ENCODE measurements at regions of chr20 and their contacts with region 1.

Region 1: DNA sequence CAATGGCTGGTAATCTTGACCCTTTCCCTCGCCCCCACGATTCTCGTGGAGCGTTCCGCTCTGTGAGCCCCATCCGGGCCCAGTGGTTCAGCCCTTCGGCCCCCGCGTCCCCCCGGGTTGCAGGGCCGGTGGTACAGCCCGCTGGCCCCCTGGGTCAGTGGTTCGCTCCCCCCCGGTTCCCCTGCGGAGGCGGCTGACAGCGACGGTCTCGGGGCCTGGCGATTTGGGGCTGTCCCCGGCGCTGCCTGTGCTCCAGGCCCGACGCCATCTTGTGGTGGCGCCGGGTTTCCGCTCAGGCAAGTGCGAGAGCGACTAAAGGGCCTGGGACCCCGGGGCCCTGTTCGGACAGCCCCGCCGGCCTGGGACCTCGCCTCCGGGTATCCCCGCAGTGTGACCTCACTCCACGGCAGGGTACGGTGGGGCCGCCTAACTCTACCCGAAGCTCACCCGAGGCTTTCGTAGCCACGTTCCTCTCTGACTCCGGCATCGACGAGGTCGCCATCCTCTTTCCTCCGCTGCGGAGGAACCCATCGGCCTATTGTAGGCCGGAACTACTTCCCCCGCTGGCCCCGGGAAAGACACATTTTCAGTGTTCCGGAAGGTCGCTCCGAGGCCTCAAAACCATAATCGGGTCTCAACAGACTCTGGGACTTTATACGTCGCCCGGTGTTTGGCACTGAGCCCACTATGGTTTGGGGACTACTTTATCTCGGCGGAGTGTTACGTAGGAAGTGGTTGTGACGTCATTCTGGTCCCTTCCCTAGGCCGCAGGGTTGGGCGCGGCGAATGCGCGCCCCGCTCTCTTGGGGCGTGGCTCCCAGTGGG is at the start of gene ZNF335:
- DNase-seq: peak; percentile 92 to 98 (median 96)
- H3K4me3 ChIP-seq: peak within 1 kb of the TSS; percentile 79 to 97
- H3K4me3 Mint-ChIP-seq: peak within 1 kb of the TSS; percentile 91 to 99 (median 95)
- H3K27ac ChIP-seq: peak within 1 kb of the TSS; percentile 100
- H3K27ac Mint-ChIP-seq: peak within 1 kb of the TSS; percentile 99 to 100 (median 100)
- H3K4me1 ChIP-seq: peaks cover 30% of the 10 kb centered on the region
- H3K4me1 Mint-ChIP-seq: peaks cover 14 to 33% (median 22%) of the 10 kb centered on the region in 4 donors
- H3K27me3 ChIP-seq: no peaks in the 10 kb centered on the region
- H3K27me3 Mint-ChIP-seq: peaks cover 2 to 8% of the 10 kb centered on the region in 2 donors
- total RNA-seq, gene ZNF335: 62.5 to 63.2 TPM

Region 2: DNA sequence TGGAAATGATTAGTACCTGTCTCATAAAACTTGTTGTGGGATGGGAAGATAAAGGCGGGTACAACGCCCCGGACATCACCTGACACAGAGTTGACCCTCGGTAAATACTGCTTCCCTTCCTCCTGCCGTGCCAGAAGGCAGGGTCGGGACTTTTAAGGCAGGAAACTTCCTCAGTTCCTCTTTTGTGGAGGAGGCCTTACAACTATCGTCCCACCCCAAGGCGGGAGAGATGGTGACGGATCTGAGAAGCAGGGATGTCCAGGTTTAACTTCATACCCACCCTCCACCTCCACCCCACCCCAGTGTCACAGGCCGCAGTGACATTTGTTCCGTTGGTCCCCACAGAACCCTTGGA is 179.6 kb before region 1 on chr20:
- CTCF ChIA-PET with region 1: interaction called, 4 read pairs
- POLR2A ChIA-PET with region 1: interaction called, 9 read pairs
- intact Hi-C with region 1: loop called (anchors 5 kb)
- DNase-seq: no peak
- H3K4me3 ChIP-seq: peak overlapping the region; percentile 79 to 93
- H3K4me3 Mint-ChIP-seq: peak overlapping the region; percentile 85 to 98 (median 93)
- H3K27ac ChIP-seq: peak overlapping the region; percentile 88
- H3K27ac Mint-ChIP-seq: peak overlapping the region; percentile 83 to 99 (median 95)
- H3K4me1 ChIP-seq: peaks cover 16% of the 10 kb centered on the region
- H3K4me1 Mint-ChIP-seq: peaks cover 11 to 18% (median 14%) of the 10 kb centered on the region in 4 donors
- H3K27me3 ChIP-seq: no peaks in the 10 kb centered on the region
- H3K27me3 Mint-ChIP-seq: no peaks in the 10 kb centered on the region

Region 3: DNA sequence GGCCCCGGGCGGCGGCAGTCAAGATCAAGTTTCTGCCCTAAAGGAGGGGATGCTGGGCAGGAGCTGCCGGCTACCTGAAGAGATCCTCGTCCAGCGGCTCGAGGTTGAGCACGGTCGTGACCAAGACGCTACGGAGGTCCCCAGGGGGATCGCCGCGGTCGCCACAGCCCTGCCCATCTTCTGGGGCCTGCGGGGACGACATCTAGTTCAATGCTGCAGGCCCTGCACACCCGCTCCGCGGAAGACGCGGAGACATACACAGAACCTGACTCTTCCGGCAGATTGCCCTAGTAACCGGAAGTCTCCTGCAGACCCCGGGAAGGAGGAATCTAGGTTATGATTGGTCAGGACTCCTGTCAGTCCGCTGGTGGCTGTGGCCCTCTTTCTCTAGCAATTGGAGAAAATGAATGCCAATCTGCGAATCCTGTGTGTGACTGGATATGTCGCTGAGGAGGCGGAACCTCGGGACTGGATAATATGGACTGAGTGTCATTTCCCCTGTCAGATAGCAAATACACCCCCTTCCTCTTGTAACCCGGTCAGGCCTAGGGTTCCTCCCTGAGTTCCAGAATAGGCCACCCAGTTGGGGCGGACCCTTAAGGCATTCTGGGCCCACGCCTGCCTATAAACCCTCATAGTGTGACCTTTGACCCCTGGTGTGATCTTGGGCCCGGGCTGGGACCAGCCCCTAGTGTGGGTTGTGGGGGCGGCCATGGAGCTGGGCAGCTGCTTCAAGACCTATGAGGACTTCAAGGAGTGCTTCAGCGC is 114.6 kb before region 1 on chr20 and contains the starts of genes ACOT8 and ZSWIM3:
- CTCF ChIA-PET with region 1: interaction called, 3 read pairs
- POLR2A ChIA-PET with region 1: interaction called, 35 read pairs
- intact Hi-C with region 1: loop called (anchors 1 kb)
- DNase-seq: peak; percentile 97 to 99 (median 99)
- H3K4me3 ChIP-seq: peak within 1 kb of the TSS; percentile 73 to 78
- H3K4me3 Mint-ChIP-seq: peak within 1 kb of the TSS; percentile 86 to 98 (median 95)
- H3K27ac ChIP-seq: peak within 1 kb of the TSS; percentile 76
- H3K27ac Mint-ChIP-seq: peak within 1 kb of the TSS; percentile 84 to 99 (median 98)
- H3K4me1 ChIP-seq: peaks cover 35% of the 10 kb centered on the region
- H3K4me1 Mint-ChIP-seq: peaks cover 25 to 66% (median 39%) of the 10 kb centered on the region in 4 donors
- H3K27me3 ChIP-seq: no peaks in the 10 kb centered on the region
- H3K27me3 Mint-ChIP-seq: no peaks in the 10 kb centered on the region
- total RNA-seq, gene ACOT8: 30.6 to 33.4 TPM
- total RNA-seq, gene ZSWIM3: 6.7 to 7.1 TPM

Region 4: GRCh38 chr20:45946149-45946970 is 25.5 kb before region 1 on chr20:
- CTCF ChIA-PET with region 1: interaction called, 23 read pairs
- POLR2A ChIA-PET with region 1: interaction called, 141 read pairs
- intact Hi-C with region 1: no loop called
- DNase-seq: peak in 3 of 5 donors; percentile 21 to 66 (median 30)
- H3K4me3 ChIP-seq: no peak overlapping the region
- H3K4me3 Mint-ChIP-seq: no peak overlapping the region
- H3K27ac ChIP-seq: no peak overlapping the region
- H3K27ac Mint-ChIP-seq: peak overlapping the region in 4 of 7 donors; percentile 48 to 74 (median 72)
- H3K4me1 ChIP-seq: peaks cover 3% of the 10 kb centered on the region
- H3K4me1 Mint-ChIP-seq: peaks cover 2 to 22% (median 14%) of the 10 kb centered on the region in 4 donors
- H3K27me3 ChIP-seq: no peaks in the 10 kb centered on the region
- H3K27me3 Mint-ChIP-seq: no peaks in the 10 kb centered on the region

Region 5: GRCh38 chr20:46013826-46014516 is 42.1 kb after region 1 on chr20:
- CTCF ChIA-PET with region 1: interaction called, 32 read pairs
- POLR2A ChIA-PET with region 1: interaction called, 18 read pairs
- intact Hi-C with region 1: loop called (anchors 5 kb)
- DNase-seq: peak; percentile 59 to 82 (median 64)
- H3K4me3 ChIP-seq: peak overlapping the region in 1 of 2 donors; percentile 33
- H3K4me3 Mint-ChIP-seq: peak overlapping the region; percentile 45 to 81 (median 64)
- H3K27ac ChIP-seq: no peak overlapping the region
- H3K27ac Mint-ChIP-seq: peak overlapping the region in 3 of 7 donors; percentile 54 to 78 (median 57)
- H3K4me1 ChIP-seq: peaks cover 50% of the 10 kb centered on the region
- H3K4me1 Mint-ChIP-seq: peaks cover 25 to 67% (median 45%) of the 10 kb centered on the region in 4 donors
- H3K27me3 ChIP-seq: peaks cover 30% of the 10 kb centered on the region
- H3K27me3 Mint-ChIP-seq: peaks cover 26 to 61% of the 10 kb centered on the region in 2 donors

Region 6: DNA sequence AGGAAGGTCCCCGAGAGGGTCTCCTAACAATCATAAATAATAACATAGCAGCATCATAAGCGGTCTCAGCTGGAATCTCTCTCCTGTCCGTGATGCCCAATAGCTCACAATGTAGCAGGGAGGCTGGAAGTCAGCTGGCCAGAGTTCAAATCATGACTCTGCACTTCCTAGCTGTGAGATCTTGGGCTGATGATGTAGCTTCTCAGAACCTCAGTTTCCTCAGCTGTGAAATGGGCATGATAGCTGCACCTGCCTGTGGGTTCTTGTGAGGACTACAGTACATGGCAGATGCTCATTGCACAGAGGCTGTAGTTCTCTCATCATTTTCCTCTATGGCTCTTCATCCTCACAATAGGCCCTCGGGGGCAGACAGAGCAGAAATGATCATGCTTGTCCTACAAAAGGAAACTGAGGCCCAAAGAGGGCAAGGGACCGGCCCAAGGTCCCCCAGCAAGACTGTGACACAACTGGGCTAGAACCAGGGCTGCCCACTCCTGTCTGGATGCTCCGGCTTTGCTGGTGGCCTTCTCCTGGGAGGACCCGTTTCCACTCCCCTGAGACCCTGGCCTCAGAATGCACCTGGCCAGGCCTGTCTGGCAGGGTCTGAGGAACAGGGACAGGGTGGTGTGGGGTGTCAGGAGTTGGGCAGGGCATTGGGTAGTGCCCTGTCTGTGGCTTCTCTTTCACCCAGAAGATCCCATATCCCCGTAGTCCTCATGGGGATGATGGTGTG is 74.9 kb after region 1 on chr20:
- CTCF ChIA-PET with region 1: no interaction called
- POLR2A ChIA-PET with region 1: no interaction called
- intact Hi-C with region 1: no loop called
- DNase-seq: no peak
- H3K4me3 ChIP-seq: no peak overlapping the region
- H3K4me3 Mint-ChIP-seq: no peak overlapping the region
- H3K27ac ChIP-seq: no peak overlapping the region
- H3K27ac Mint-ChIP-seq: no peak overlapping the region
- H3K4me1 ChIP-seq: no peaks in the 10 kb centered on the region
- H3K4me1 Mint-ChIP-seq: no peaks in the 10 kb centered on the region
- H3K27me3 ChIP-seq: peaks cover 4% of the 10 kb centered on the region
- H3K27me3 Mint-ChIP-seq: peaks cover 40 to 42% of the 10 kb centered on the region in 2 donors

Region 7: DNA sequence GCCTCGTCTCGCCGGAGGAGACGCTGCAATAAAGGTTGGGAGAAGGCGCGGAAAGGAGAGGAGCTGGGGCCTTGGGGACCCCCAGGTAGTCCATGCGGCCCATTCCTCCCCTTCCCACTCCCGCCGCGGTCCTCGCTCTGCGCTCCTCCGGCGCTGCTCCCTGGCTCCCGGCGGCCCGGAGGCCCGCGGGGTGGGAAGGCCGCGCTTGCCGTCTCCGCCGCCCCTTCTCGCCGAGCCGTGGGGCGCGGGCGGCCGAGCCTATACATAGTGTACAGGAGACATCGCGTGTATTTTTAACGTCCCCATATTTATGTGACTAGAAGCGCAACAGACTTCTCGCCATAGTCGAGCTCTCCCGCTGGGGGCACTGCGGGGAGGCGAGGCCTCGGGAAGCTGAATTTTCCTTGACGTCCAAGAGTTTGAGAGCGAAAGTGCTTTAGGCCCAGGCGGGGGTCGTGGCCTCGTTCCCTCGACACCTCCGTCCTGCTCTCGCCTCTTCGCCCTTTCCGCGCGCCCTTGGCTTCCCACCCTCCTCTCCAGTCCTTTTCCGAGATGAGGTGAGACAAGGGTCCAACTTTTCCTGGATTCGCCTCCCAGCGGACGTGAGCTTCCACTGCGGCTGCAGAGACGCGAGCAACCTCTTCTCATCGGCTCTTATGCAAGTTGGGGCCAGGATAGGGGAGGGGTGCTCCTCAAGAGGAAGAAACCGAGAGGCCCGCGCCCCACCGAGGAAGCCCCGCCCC is 86.1 kb after region 1 on chr20:
- CTCF ChIA-PET with region 1: no interaction called
- POLR2A ChIA-PET with region 1: no interaction called
- intact Hi-C with region 1: no loop called
- DNase-seq: peak in 3 of 5 donors; percentile 12 to 15 (median 13)
- H3K4me3 ChIP-seq: no peak overlapping the region
- H3K4me3 Mint-ChIP-seq: peak overlapping the region; percentile 52 to 75 (median 66)
- H3K27ac ChIP-seq: no peak overlapping the region
- H3K27ac Mint-ChIP-seq: peak overlapping the region in 1 of 7 donors; percentile 72
- H3K4me1 ChIP-seq: peaks cover 46% of the 10 kb centered on the region
- H3K4me1 Mint-ChIP-seq: peaks cover 38 to 58% (median 48%) of the 10 kb centered on the region in 4 donors
- H3K27me3 ChIP-seq: peaks cover 5% of the 10 kb centered on the region
- H3K27me3 Mint-ChIP-seq: peaks cover 0 to 2% of the 10 kb centered on the region in 2 donors

Region 8: DNA sequence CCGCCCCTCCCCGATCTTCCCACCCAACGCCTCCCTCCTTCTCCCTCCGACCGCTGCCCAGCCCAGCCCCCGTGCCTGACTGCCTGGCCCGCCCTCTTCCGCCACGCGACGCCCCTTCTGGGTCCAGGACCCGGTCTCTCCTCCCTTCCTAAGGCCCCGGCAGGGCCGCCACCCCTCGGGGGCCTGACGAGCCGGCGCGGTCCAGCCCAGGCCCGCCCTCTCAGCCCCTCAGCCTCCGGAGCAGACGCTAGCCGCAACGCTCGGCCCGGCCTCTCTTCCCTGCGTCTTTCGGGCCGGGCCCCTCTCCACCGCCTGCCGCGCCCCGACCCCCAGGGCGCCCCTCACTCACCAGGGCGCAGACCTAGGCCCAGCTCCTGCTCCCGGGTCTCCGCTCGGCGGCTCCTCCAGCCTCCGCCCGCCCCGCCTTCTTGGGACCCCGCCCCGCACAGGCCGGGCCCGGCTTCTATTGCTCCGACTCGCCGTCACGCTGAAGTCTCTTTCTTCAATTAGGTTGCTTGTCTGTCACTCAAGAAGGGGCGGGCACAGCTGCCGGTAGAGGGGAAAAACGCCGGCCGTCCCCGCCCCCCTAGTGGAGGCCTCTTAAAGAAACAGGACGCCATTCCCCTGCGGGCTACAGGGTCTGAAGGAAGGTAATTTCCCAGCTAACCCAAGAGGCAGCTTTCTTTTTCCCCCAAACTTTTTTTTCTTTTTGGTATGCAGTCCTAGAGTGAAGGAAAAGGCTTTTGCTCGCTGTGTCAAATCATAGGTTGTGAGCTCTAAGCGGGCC is 434.5 kb after region 1 on chr20 and contains the start of gene ELMO2:
- CTCF ChIA-PET with region 1: no interaction called
- POLR2A ChIA-PET with region 1: interaction called, 10 read pairs
- intact Hi-C with region 1: loop called (anchors 1 kb)
- DNase-seq: peak; percentile 94 to 98 (median 95)
- H3K4me3 ChIP-seq: peak within 1 kb of the TSS; percentile 64 to 73
- H3K4me3 Mint-ChIP-seq: peak within 1 kb of the TSS; percentile 91 to 99 (median 96)
- H3K27ac ChIP-seq: peak within 1 kb of the TSS; percentile 95
- H3K27ac Mint-ChIP-seq: peak within 1 kb of the TSS; percentile 96 to 99 (median 97)
- H3K4me1 ChIP-seq: peaks cover 63% of the 10 kb centered on the region
- H3K4me1 Mint-ChIP-seq: peaks cover 49 to 83% (median 66%) of the 10 kb centered on the region in 4 donors
- H3K27me3 ChIP-seq: no peaks in the 10 kb centered on the region
- H3K27me3 Mint-ChIP-seq: peaks cover 0 to 3% of the 10 kb centered on the region in 2 donors
- total RNA-seq, gene ELMO2: 65.1 to 70.7 TPM